GM10248 (cell line): ENCODE measurements at regions of chr17 and their contacts with region 1.

Region 1: GRCh38 chr17:29687596-29687995 is 64.9 kb upstream of the CORO6 start:
- DNase-seq: no peak
- CTCF ChIP-seq: no peak

Region 2: GRCh38 chr17:29699283-29699682 is 11.7 kb after region 1 on chr17:
- CTCF ChIA-PET with region 1: interaction called, 13 read pairs
- POLR2A ChIA-PET with region 1: no interaction called
- DNase-seq: no peak
- CTCF ChIP-seq: no peak

Region 3: DNA sequence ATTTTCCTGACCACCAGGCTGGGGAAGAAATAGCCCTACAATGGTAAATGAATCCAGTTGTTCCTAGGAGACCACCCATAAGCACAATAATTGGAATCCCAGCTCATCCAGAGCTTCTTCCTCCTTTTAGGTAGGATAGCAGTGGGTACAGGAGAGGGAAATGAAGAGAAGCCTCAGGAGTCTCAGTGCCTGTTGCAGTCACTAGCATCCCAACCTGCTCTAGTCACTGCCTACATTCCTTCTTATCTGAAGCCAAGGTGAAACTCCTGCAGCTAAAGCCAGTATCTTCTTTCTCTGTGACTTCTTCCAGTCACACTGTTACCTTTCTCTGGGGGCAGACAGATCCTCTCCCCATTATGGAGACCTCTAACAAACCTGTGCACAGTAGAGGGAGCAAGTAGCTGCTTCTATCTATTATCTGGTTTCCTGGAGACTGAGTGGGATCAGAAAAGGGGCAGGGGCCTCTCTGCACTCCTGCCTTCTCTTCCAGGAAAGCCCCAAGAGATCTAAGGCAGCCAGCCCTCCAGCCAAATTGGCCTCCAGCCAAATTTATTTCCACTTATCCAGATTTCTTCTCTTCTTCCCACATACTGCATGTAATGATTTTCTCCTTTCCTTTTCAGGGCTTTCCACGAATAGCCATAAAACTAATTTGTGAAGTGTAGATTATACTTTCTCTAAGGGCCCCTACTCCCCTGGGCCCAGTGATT is 156.9 kb after region 1 on chr17:
- CTCF ChIA-PET with region 1: no interaction called
- POLR2A ChIA-PET with region 1: no interaction called
- DNase-seq: no peak
- CTCF ChIP-seq: no peak